Colonic mucosa (tissue), 4 donors: ENCODE measurements at regions of chr2 and their contacts with region 1.

Region 1: DNA sequence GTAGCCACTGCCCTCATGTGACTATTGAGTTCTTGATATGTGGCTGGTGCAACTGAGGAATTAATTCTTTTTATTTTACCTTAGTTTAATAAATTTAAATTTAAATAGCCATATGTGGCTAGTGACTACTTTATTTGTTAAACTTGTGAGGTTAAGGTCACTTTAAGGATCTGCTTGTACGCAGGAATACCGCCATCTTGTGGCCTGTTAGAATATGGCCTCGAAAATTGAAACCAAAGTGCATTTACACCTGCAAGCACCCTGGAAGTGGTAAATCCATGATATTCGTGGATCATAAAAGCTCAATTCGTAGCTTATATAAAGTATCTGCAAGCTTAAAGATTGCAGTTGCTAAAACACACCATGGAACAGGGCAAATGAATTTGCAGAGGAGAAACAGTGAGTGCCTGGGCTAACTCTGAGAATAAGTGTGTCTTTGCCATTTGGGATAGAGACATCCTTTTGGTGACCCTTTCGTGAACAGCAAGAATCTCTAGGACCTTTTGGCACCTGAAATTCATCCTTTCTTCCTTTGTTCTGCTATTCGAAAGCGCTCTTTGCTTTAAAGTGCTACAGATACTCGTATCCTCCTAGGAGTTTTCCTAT is 59.9 kb upstream of the REG3A start:
- DNase-seq: peak; percentile 43
- H3K4me3 ChIP-seq: no peak overlapping the region
- H3K27ac ChIP-seq: no peak overlapping the region
- H3K4me1 ChIP-seq: no peaks in the 10 kb centered on the region
- H3K27me3 ChIP-seq: no peaks in the 10 kb centered on the region
- CTCF ChIP-seq: peak; percentile 68

Region 2: GRCh38 chr2:79041032-79041448 is 178.4 kb before region 1 on chr2:
- intact Hi-C with region 1: loop called (anchors 5 kb)
- DNase-seq: no peak
- H3K4me3 ChIP-seq: no peak overlapping the region
- H3K27ac ChIP-seq: no peak overlapping the region
- H3K4me1 ChIP-seq: no peaks in the 10 kb centered on the region
- H3K27me3 ChIP-seq: no peaks in the 10 kb centered on the region
- CTCF ChIP-seq: peak; percentile 31

Region 3: GRCh38 chr2:79139423-79139822 is 80.1 kb before region 1 on chr2:
- intact Hi-C with region 1: loop called (anchors 5 kb)
- DNase-seq: peak; percentile 25
- H3K4me3 ChIP-seq: no peak overlapping the region
- H3K27ac ChIP-seq: no peak overlapping the region
- H3K4me1 ChIP-seq: no peaks in the 10 kb centered on the region
- H3K27me3 ChIP-seq: peaks cover 31% of the 10 kb centered on the region
- CTCF ChIP-seq: no peak